IMR-90 (cell line): ENCODE measurements at regions of chr10 and their contacts with region 1.

Region 1: GRCh38 chr10:37754538-37755323 is 102.7 kb downstream of the ZNF248 start:
- DNase-seq: no peak
- ATAC-seq: peak; percentile 85
- H3K4me3 ChIP-seq: no peak overlapping the region
- H3K27ac ChIP-seq: no peak overlapping the region
- H3K4me1 ChIP-seq: no peaks in the 10 kb centered on the region
- H3K27me3 ChIP-seq: no peaks in the 10 kb centered on the region
- CTCF ChIP-seq: peak; percentile 42
- POLR2A ChIP-seq: no peak
- RAD21 ChIP-seq: peak; percentile 51

Region 2: DNA sequence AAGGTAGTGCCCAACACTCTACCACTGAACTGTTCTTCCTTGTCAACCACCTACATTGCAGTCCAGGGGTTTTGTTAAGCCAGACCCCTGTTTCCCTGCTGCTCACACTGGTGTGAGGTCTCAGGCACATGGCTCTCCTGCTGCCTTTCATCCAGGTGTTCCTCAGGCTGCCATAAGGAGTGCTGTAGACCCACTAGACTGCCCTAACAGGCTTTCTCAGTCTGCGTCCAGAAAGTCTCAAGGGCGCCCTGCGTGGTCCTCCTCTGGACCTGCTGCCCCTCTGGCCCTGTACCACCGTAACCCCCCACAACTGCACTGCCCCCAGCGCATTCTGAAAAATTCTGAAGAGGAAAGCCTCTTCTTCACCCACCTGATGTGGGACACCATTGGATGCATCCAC is 855.1 kb before region 1 on chr10:
- CTCF ChIA-PET with region 1: no interaction called
- POLR2A ChIA-PET with region 1: no interaction called
- dilution Hi-C with region 1: no loop called
- in situ Hi-C with region 1: no loop called
- intact Hi-C with region 1: loop called (anchors 5 kb)
- DNase-seq: no peak
- ATAC-seq: no peak
- H3K4me3 ChIP-seq: no peak overlapping the region
- H3K27ac ChIP-seq: no peak overlapping the region
- H3K4me1 ChIP-seq: no peaks in the 10 kb centered on the region
- H3K27me3 ChIP-seq: no peaks in the 10 kb centered on the region
- CTCF ChIP-seq: no peak
- POLR2A ChIP-seq: no peak
- RAD21 ChIP-seq: no peak

Region 3: GRCh38 chr10:37789590-37789989 is 34.9 kb after region 1 on chr10:
- CTCF ChIA-PET with region 1: no interaction called
- POLR2A ChIA-PET with region 1: no interaction called
- dilution Hi-C with region 1: no loop called
- in situ Hi-C with region 1: no loop called
- intact Hi-C with region 1: no loop called
- DNase-seq: no peak
- ATAC-seq: no peak
- H3K4me3 ChIP-seq: no peak overlapping the region
- H3K27ac ChIP-seq: no peak overlapping the region
- H3K4me1 ChIP-seq: no peaks in the 10 kb centered on the region
- H3K27me3 ChIP-seq: no peaks in the 10 kb centered on the region
- CTCF ChIP-seq: no peak
- POLR2A ChIP-seq: no peak
- RAD21 ChIP-seq: no peak